ENCODE measurements at regions of chr18 and their contacts with region 1.

Region 1: GRCh38 chr18:59459369-59460079 is 100.5 kb upstream of the LMAN1 start:
- DNase-seq: peak; percentile 12
- ATAC-seq: no peak
- H3K4me3 ChIP-seq: no peak overlapping the region
- H3K4me3 Mint-ChIP-seq: no peak overlapping the region
- H3K27ac ChIP-seq: no peak overlapping the region
- H3K27ac Mint-ChIP-seq: no peak overlapping the region
- H3K4me1 ChIP-seq: no peaks in the 10 kb centered on the region
- H3K4me1 Mint-ChIP-seq: no peaks in the 10 kb centered on the region
- H3K27me3 ChIP-seq: peaks cover 0 to 4% (median 2%) of the 10 kb centered on the region in 4 experiments
- H3K27me3 Mint-ChIP-seq: peaks cover 9% of the 10 kb centered on the region
- CTCF ChIP-seq: peak; percentile 80

Region 2: DNA sequence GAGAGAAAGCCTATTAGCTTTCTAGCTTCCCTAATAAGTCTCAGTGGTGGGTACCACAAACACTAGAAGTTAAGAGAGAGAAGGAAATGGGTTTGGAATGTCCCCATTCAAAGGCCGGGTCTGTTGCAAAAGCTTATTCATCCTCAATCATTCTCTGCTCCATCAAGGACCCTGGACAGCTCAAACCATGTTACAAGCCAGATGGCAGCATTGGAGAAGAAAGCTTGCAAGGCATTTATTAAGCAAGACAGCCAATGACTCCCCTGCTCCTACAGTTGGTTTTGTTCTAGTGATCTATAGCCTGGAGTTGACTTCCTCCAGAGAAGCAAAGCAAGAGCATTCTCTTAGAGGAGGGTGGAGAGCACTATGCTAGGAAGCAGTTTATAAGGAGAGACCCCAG is 13.5 kb before region 1 on chr18:
- CTCF ChIA-PET with region 1: interaction called, 12 read pairs
- POLR2A ChIA-PET with region 1: no interaction called
- intact Hi-C with region 1: no loop called
- DNase-seq: no peak
- ATAC-seq: no peak
- H3K4me3 ChIP-seq: no peak overlapping the region
- H3K4me3 Mint-ChIP-seq: no peak overlapping the region
- H3K27ac ChIP-seq: no peak overlapping the region
- H3K27ac Mint-ChIP-seq: no peak overlapping the region
- H3K4me1 ChIP-seq: no peaks in the 10 kb centered on the region
- H3K4me1 Mint-ChIP-seq: no peaks in the 10 kb centered on the region
- H3K27me3 ChIP-seq: peaks cover 0 to 3% (median 0%) of the 10 kb centered on the region in 4 experiments
- H3K27me3 Mint-ChIP-seq: peaks cover 9% of the 10 kb centered on the region
- CTCF ChIP-seq: no peak

Region 3: DNA sequence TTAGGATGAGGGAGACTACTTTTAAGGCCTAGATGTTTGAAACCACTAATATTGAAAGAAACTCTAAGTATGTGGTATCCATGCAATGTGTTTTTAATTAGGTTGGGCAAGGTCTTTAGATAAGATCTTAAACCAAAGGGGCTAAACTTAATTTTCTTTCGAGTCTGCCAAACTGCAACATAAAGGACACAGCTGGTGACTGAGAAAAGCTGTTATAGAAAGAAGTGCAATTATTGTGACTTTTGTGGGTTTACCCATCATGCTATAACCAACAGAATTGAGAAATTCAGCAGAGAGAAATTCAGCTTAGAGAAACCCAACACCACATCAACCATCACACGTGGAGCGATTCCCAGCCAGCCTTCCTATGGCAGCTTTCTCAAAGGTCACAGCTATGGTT is 19.1 kb after region 1 on chr18:
- CTCF ChIA-PET with region 1: no interaction called
- POLR2A ChIA-PET with region 1: no interaction called
- intact Hi-C with region 1: no loop called
- DNase-seq: no peak
- ATAC-seq: no peak
- H3K4me3 ChIP-seq: no peak overlapping the region
- H3K4me3 Mint-ChIP-seq: no peak overlapping the region
- H3K27ac ChIP-seq: no peak overlapping the region
- H3K27ac Mint-ChIP-seq: no peak overlapping the region
- H3K4me1 ChIP-seq: no peaks in the 10 kb centered on the region
- H3K4me1 Mint-ChIP-seq: no peaks in the 10 kb centered on the region
- H3K27me3 ChIP-seq: peaks cover 0 to 7% (median 0%) of the 10 kb centered on the region in 4 experiments
- H3K27me3 Mint-ChIP-seq: peaks cover 46% of the 10 kb centered on the region
- CTCF ChIP-seq: no peak

Region 4: GRCh38 chr18:59823596-59824195 is 364.2 kb after region 1 on chr18:
- CTCF ChIA-PET with region 1: interaction called, 20 read pairs
- POLR2A ChIA-PET with region 1: no interaction called
- intact Hi-C with region 1: no loop called
- DNase-seq: peak; percentile 19
- ATAC-seq: no peak
- H3K4me3 ChIP-seq: no peak overlapping the region
- H3K4me3 Mint-ChIP-seq: no peak overlapping the region
- H3K27ac ChIP-seq: no peak overlapping the region
- H3K27ac Mint-ChIP-seq: no peak overlapping the region
- H3K4me1 ChIP-seq: no peaks in the 10 kb centered on the region
- H3K4me1 Mint-ChIP-seq: no peaks in the 10 kb centered on the region
- H3K27me3 ChIP-seq: peaks cover 0 to 2% (median 1%) of the 10 kb centered on the region in 4 experiments
- H3K27me3 Mint-ChIP-seq: peaks cover 20% of the 10 kb centered on the region
- CTCF ChIP-seq: peak; percentile 53

Measured in B cell (primary cell).